AG04450 (cell line): ENCODE measurements at regions of chr2 and their contacts with region 1.

Region 1: GRCh38 chr2:174985630-174986029 is 19.6 kb downstream of the CHN1 start:
- DNase-seq: no peak
- H3K4me3 ChIP-seq: no peak overlapping the region
- H3K27ac ChIP-seq: no peak overlapping the region
- H3K27me3 ChIP-seq: no peaks in the 10 kb centered on the region
- CTCF ChIP-seq: peak; percentile 74

Region 2: GRCh38 chr2:174748948-174749347 is 236.7 kb before region 1 on chr2:
- CTCF ChIA-PET with region 1: interaction called, 238 read pairs
- POLR2A ChIA-PET with region 1: no interaction called
- DNase-seq: peak; percentile 16
- H3K4me3 ChIP-seq: no peak overlapping the region
- H3K27ac ChIP-seq: no peak overlapping the region
- H3K27me3 ChIP-seq: peaks cover 2% of the 10 kb centered on the region
- CTCF ChIP-seq: peak; percentile 83

Region 3: DNA sequence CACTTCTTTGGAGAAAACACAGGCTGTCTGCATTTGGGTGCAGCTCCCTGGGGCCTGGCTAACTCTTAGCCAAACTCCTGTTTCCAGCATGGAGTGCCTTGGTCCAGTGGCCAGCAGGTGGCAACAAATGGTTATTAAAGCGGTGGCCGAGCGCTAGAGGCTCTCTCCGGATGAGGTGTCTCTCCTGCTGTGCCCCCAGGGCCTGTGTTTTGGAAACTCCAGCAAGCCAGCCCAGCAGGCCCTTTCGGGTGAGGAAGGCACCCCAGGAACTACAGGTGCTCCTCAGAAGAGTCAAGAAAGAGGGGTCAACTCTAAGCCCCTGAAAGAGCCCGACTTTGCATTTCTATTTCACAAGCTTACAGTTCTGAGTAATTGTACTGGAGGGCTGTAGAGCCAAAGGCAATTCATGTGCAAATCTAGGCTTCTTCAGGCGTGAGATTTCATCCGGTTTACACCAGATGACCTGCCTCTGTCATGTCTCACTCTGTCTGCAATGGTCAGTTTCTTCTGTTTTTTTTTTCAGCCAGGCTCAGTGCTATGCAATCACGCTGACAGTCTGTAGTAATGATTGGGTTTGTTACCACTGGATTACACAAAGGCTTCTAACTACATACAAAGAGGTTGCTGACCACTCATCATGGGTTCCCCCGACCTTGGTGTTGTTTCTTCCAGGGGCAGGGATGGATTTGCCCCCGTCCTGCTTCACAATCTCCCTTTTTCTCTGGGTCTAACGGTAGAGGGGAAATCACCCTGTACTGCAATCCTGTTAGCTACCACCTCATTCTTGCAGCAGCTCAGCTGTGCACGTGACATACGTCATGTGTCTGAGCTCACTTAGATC is 213.8 kb before region 1 on chr2:
- CTCF ChIA-PET with region 1: interaction called, 383 read pairs
- POLR2A ChIA-PET with region 1: no interaction called
- DNase-seq: no peak
- H3K4me3 ChIP-seq: no peak overlapping the region
- H3K27ac ChIP-seq: peak overlapping the region; percentile 90
- H3K27me3 ChIP-seq: no peaks in the 10 kb centered on the region
- CTCF ChIP-seq: peak; percentile 95

Region 4: GRCh38 chr2:174835797-174836255 is 149.8 kb before region 1 on chr2:
- CTCF ChIA-PET with region 1: interaction called, 10 read pairs
- POLR2A ChIA-PET with region 1: no interaction called
- DNase-seq: peak; percentile 86
- H3K4me3 ChIP-seq: no peak overlapping the region
- H3K27ac ChIP-seq: peak overlapping the region; percentile 81
- H3K27me3 ChIP-seq: no peaks in the 10 kb centered on the region
- CTCF ChIP-seq: no peak

Region 5: DNA sequence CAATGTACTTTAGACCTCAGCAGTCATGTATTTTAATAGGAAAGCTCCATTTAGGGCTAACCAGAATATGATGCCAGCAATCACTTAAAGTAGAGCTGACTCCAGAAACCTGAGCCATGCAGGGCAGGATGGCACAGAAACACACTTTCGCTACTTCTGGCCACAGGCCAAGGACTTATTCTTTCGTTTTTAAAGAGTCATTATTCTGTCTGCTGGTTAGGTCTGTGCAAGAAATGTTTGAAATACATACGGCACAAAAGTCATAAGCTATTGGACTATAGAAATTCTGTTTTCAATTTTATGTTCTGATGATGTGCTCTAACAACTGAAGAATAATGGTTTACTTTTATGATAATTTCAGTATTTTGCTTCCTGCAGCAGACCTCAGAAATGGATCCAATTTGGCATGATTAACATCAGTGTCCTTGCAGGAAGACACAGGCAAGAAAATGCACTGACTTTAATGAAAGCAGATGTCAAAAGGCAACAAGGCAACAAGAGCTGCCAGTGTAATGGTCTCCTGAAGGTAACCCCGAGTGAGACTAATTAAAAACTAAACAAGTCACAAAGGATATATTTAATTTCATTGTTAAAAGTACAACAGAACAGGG is 107.0 kb before region 1 on chr2:
- CTCF ChIA-PET with region 1: interaction called, 11 read pairs
- POLR2A ChIA-PET with region 1: no interaction called
- DNase-seq: no peak
- H3K4me3 ChIP-seq: peak overlapping the region; percentile 47
- H3K27ac ChIP-seq: no peak overlapping the region
- H3K27me3 ChIP-seq: no peaks in the 10 kb centered on the region
- CTCF ChIP-seq: no peak

Region 6: DNA sequence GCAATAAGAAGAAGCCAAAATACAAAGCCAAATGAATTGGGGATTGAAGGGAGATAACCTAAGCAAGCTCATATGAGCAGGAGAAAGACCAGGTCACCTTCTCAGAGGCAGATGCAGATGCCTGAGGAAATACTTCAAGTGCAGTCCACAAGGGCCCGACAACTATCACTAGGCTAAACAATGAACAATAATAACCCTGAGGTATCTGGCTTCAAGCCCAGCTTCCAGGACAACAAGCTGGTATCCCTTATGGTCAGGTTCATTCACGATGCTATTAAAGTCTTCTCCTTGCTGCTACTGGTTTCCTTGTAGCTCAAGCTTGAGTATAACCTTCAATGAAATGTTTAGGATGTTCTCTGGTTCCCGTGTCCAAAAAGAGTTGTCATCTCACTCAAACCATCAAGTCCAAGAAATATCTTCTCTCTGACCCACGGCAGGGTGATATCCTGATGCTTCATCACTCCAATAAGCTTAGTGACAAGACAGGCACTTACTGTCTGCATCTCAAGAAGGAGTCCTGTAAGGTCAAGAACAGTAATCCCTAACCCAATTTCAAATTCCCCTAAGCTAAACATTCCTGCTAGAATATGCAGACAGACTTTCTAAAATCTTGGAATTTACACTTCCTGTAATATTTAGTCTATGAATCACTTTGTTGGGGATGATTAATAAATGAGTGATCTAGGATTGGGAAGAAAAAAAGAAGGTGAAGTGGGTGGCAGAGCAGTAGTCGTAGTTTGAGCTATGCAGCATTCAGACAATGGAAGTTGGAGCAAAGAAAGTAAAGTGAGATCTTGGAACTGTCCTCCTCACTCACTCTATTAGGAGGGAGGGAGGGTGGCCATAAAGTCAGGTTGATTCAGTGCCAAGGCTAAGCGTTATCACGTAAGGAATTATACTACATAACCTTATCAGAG is 13.5 kb before region 1 on chr2:
- CTCF ChIA-PET with region 1: interaction called, 10 read pairs
- POLR2A ChIA-PET with region 1: no interaction called
- DNase-seq: peak; percentile 10
- H3K4me3 ChIP-seq: no peak overlapping the region
- H3K27ac ChIP-seq: no peak overlapping the region
- H3K27me3 ChIP-seq: no peaks in the 10 kb centered on the region
- CTCF ChIP-seq: no peak

Region 7: DNA sequence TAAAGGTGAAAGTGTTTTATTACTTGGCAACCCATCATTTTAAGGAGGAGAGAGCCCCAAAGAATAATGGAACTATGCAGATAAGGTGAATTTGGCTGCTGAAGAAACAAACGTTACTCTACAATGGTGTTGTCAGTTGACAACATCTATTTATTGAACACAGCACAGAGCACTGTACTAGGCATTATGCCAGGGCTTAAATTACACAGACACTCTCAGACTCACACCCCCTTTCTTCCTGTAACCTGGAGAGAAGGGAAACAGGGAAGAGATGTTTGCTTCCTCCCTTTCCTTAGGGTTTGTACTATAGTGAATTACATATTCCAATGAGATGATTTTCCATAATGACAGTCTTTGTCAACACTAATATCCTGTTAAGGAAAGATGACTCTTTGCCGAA is 289.9 kb after region 1 on chr2:
- CTCF ChIA-PET with region 1: no interaction called
- POLR2A ChIA-PET with region 1: no interaction called
- DNase-seq: no peak
- H3K4me3 ChIP-seq: no peak overlapping the region
- H3K27ac ChIP-seq: no peak overlapping the region
- H3K27me3 ChIP-seq: peaks cover 3% of the 10 kb centered on the region
- CTCF ChIP-seq: no peak